ENCODE measurements at regions of chr14 and their contacts with region 1.

Region 1: DNA sequence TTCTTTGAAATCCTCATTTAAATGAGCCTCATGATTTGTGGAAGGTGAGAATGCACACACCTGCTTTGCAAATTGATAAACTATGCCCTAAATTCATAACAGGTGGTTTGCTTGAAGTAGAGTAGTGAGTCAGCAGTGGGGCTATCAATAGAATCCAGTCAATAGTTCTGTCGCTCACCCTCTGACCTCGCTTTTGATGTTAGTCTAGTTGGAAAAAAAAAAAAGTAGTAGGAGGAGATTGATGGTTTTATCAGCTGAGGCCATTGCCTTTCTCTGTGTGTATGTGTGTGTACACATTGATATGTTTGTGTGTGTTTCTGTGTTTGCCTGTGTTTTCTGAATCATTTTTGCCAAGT is 267.3 kb downstream of the SNAPC1 start:
- DNase-seq: no peak
- ATAC-seq: no peak
- H3K4me3 ChIP-seq: no peak overlapping the region
- H3K27ac ChIP-seq: no peak overlapping the region
- H3K4me1 ChIP-seq: peaks cover 38% of the 10 kb centered on the region
- H3K27me3 ChIP-seq: no peaks in the 10 kb centered on the region
- CTCF ChIP-seq: no peak

Region 2: GRCh38 chr14:61884711-61885110 is 144.8 kb before region 1 on chr14:
- CTCF ChIA-PET with region 1: no interaction called
- POLR2A ChIA-PET with region 1: interaction called, 3 read pairs
- intact Hi-C with region 1: loop called (anchors 2 kb)
- DNase-seq: peak; percentile 80
- ATAC-seq: peak; percentile 16; the same call in 1 of the 2 replicates
- H3K4me3 ChIP-seq: peak overlapping the region; percentile 45; the same call in 1 of the 2 replicates
- H3K27ac ChIP-seq: peak overlapping the region; percentile 91
- H3K4me1 ChIP-seq: peaks cover 24% of the 10 kb centered on the region
- H3K27me3 ChIP-seq: no peaks in the 10 kb centered on the region
- CTCF ChIP-seq: no peak

Region 3: GRCh38 chr14:61934385-61934784 is 95.2 kb before region 1 on chr14:
- CTCF ChIA-PET with region 1: no interaction called
- POLR2A ChIA-PET with region 1: no interaction called
- intact Hi-C with region 1: loop called (anchors 1 kb)
- DNase-seq: peak; percentile 98
- ATAC-seq: peak; percentile 92
- H3K4me3 ChIP-seq: no peak overlapping the region
- H3K27ac ChIP-seq: peak overlapping the region; percentile 93
- H3K4me1 ChIP-seq: peaks cover 52% of the 10 kb centered on the region
- H3K27me3 ChIP-seq: no peaks in the 10 kb centered on the region
- CTCF ChIP-seq: no peak

Region 4: DNA sequence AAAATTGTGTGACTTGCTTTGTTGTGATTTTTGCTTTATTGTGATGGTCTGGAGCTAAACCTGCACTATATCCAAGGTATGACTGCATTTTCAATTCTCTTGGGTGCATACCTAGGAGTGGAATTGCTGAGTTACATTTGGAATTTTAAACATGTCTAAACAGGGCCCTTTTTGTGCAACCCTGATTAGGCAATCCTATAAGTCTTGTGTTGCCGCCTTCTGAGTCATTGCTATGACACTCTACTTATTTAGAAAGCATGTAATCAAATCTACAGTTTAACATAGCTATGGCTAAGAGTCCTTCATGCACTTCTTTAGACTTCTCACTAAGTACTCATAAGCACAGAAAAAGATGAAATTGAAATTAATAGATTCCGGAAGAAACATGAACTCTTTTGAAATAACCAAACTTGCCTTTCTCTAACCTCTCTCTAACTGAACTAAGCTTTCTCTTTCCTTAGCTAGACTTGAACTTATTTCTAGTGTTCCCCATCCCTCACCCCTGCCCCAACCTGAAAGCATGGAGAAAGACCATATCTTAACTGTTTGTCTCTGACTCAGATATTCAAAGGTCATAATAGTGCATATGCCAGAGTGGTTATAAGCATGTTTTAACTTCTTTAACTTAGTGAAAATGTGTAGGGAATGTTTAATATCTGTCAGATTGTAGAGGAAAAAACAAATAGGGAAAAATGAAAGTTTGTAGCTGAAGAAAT is 64.4 kb before region 1 on chr14:
- CTCF ChIA-PET with region 1: no interaction called
- POLR2A ChIA-PET with region 1: interaction called, 3 read pairs
- intact Hi-C with region 1: loop called (anchors 1 kb)
- DNase-seq: peak; percentile 87
- ATAC-seq: peak; percentile 88
- H3K4me3 ChIP-seq: no peak overlapping the region
- H3K27ac ChIP-seq: peak overlapping the region; percentile 55
- H3K4me1 ChIP-seq: peaks cover 25% of the 10 kb centered on the region
- H3K27me3 ChIP-seq: no peaks in the 10 kb centered on the region
- CTCF ChIP-seq: no peak

Region 5: GRCh38 chr14:62126879-62127478 is 97.4 kb after region 1 on chr14:
- CTCF ChIA-PET with region 1: interaction called, 7 read pairs
- POLR2A ChIA-PET with region 1: interaction called, 3 read pairs
- intact Hi-C with region 1: loop called (anchors 1 kb)
- DNase-seq: peak; percentile 85
- ATAC-seq: peak; percentile 88
- H3K4me3 ChIP-seq: no peak overlapping the region
- H3K27ac ChIP-seq: peak overlapping the region; percentile 15; the same call in 1 of the 2 replicates
- H3K4me1 ChIP-seq: peaks cover 5% of the 10 kb centered on the region; the same call in 1 of the 2 replicates
- H3K27me3 ChIP-seq: no peaks in the 10 kb centered on the region
- CTCF ChIP-seq: peak; percentile 94

Region 6: GRCh38 chr14:62854951-62855350 is 825.4 kb after region 1 on chr14:
- CTCF ChIA-PET with region 1: no interaction called
- POLR2A ChIA-PET with region 1: no interaction called
- intact Hi-C with region 1: no loop called
- DNase-seq: no peak
- ATAC-seq: no peak
- H3K4me3 ChIP-seq: no peak overlapping the region
- H3K27ac ChIP-seq: no peak overlapping the region
- H3K4me1 ChIP-seq: no peaks in the 10 kb centered on the region
- H3K27me3 ChIP-seq: peaks cover 3% of the 10 kb centered on the region; the same call in 1 of the 2 replicates
- CTCF ChIP-seq: no peak

Measured in PC-3 (cell line).